GM12878 (cell line): ENCODE measurements at regions of chr10 and their contacts with region 1.

Region 1: DNA sequence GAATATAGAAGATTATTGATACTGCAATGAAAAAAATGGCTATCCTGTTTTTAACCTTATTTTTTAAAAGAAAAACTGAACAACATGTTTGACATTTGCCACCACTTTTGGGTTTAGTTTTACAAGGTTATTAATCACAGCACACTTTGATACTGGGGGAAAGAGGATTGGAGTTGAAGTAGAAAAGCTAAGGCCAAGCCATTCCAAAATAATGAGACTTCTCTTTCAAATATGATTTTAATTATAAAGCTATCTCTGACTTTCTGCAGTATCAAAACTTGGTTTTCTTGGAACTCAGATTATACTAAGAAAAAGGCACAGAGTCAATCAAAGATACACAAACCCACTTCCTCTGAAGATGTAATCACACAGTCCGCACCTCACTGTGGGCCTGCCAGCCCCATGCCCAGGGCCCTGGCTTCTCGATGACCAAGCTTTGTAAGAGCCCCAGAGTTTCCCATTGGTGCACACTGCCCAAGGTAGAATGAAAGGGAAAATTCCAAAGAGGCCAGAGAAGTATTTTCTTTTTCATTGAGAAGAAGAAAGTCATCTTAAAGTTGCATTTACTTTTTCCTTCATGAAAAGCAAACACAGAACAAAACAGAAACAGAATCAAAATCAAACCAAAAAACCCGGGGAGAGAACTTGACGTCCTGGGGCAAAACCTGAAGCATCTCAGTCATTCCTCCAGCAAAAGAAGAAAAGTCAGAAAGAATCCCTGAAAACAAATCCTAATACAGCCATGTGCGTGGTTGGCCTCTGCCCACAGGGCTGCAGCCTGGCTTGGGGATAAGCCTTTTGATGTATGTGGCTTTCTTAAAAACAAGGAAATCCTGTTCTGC is 187.7 kb upstream of the KLF6 start:
- DNase-seq: no peak
- ATAC-seq: no peak
- H3K4me3 ChIP-seq: no peak overlapping the region
- H3K27ac ChIP-seq: no peak overlapping the region
- H3K4me1 ChIP-seq: no peaks in the 10 kb centered on the region
- H3K27me3 ChIP-seq: no peaks in the 10 kb centered on the region
- CTCF ChIP-seq: no peak
- EP300 ChIP-seq: no peak
- POLR2A ChIP-seq: no peak
- RAD21 ChIP-seq: no peak

Region 2: GRCh38 chr10:3783316-3783681 is 189.4 kb before region 1 on chr10:
- CTCF ChIA-PET with region 1: no interaction called
- POLR2A ChIA-PET with region 1: no interaction called
- RAD21 ChIA-PET with region 1: no interaction called
- SMC1A ChIA-PET with region 1: no interaction called
- in situ Hi-C with region 1: no loop called
- intact Hi-C with region 1: no loop called
- DNase-seq: peak; percentile 60
- ATAC-seq: peak; percentile 27
- H3K4me3 ChIP-seq: peak overlapping the region; percentile 93
- H3K27ac ChIP-seq: peak overlapping the region; percentile 98
- H3K4me1 ChIP-seq: peaks cover 13% of the 10 kb centered on the region
- H3K27me3 ChIP-seq: no peaks in the 10 kb centered on the region
- CTCF ChIP-seq: no peak
- EP300 ChIP-seq: 0 out of 4 replicates have a peak, but pooled peaks of 1 of the 2 experiments have one; percentile 8
- POLR2A ChIP-seq: peak; percentile 92
- RAD21 ChIP-seq: peak; percentile 12; the same call in 1 of the 2 replicates

Region 3: GRCh38 chr10:3908183-3908582 is 64.5 kb before region 1 on chr10:
- CTCF ChIA-PET with region 1: no interaction called
- POLR2A ChIA-PET with region 1: no interaction called
- RAD21 ChIA-PET with region 1: no interaction called
- SMC1A ChIA-PET with region 1: no interaction called
- in situ Hi-C with region 1: no loop called
- intact Hi-C with region 1: no loop called
- DNase-seq: no peak
- ATAC-seq: no peak
- H3K4me3 ChIP-seq: no peak overlapping the region
- H3K27ac ChIP-seq: no peak overlapping the region
- H3K4me1 ChIP-seq: peaks cover 4% of the 10 kb centered on the region
- H3K27me3 ChIP-seq: no peaks in the 10 kb centered on the region
- CTCF ChIP-seq: no peak
- EP300 ChIP-seq: no peak
- POLR2A ChIP-seq: no peak
- RAD21 ChIP-seq: no peak

Region 4: DNA sequence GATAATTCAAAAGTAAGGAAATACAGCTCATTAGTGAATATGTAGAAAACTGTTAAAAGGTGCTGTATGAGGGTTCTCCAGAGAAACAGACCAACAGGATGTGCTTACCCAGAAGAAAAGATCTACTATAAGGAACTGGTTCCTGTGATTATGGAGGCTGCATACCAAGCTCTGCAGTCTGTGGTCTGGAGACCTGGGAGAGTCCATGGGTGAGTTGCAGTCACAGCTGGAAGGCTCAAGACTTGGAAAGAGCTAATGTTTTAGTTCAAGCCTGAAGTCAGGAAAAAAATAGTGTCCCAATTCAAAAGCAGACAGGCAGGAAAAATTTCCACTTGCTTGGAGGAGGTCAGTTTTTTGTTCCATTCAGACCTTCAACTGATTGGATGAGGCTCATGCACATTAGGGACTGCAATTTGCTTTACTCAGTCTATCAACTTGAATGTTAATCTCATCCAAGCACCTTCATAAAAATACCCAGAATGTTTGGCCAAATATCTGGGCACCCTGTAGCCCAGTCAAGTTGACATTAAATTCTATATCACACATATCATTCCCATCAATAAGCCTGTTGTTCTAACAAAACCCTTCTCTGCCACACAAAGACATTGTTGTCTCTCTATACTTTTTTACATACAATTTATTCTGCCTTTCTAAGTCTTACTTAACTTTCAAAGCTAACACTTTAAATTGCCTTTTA is 10.2 kb after region 1 on chr10:
- CTCF ChIA-PET with region 1: interaction called, 4 read pairs
- POLR2A ChIA-PET with region 1: no interaction called
- RAD21 ChIA-PET with region 1: no interaction called
- SMC1A ChIA-PET with region 1: interaction called, 12 read pairs
- in situ Hi-C with region 1: no loop called
- intact Hi-C with region 1: no loop called
- DNase-seq: no peak
- ATAC-seq: no peak
- H3K4me3 ChIP-seq: no peak overlapping the region
- H3K27ac ChIP-seq: no peak overlapping the region
- H3K4me1 ChIP-seq: peaks cover 4% of the 10 kb centered on the region; the same call in 1 of the 2 replicates
- H3K27me3 ChIP-seq: no peaks in the 10 kb centered on the region
- CTCF ChIP-seq: no peak
- EP300 ChIP-seq: no peak
- POLR2A ChIP-seq: no peak
- RAD21 ChIP-seq: no peak

Region 5: GRCh38 chr10:4316161-4316810 is 343.6 kb after region 1 on chr10:
- CTCF ChIA-PET with region 1: no interaction called
- POLR2A ChIA-PET with region 1: no interaction called
- RAD21 ChIA-PET with region 1: no interaction called
- SMC1A ChIA-PET with region 1: no interaction called
- in situ Hi-C with region 1: no loop called
- intact Hi-C with region 1: no loop called
- DNase-seq: no peak
- ATAC-seq: no peak
- H3K4me3 ChIP-seq: no peak overlapping the region
- H3K27ac ChIP-seq: no peak overlapping the region
- H3K4me1 ChIP-seq: no peaks in the 10 kb centered on the region
- H3K27me3 ChIP-seq: no peaks in the 10 kb centered on the region
- CTCF ChIP-seq: no peak
- EP300 ChIP-seq: no peak
- POLR2A ChIP-seq: no peak
- RAD21 ChIP-seq: no peak